ENCODE measurements at regions of chr7 and their contacts with region 1.

Region 1: GRCh38 chr7:129122751-129123509 is 21.6 kb upstream of the TSPAN33 start:
- DNase-seq: peak; percentile 53
- ATAC-seq: peak; percentile 89
- H3K4me3 Mint-ChIP-seq: peak overlapping the region; percentile 73
- H3K27ac Mint-ChIP-seq: peak overlapping the region; percentile 96
- H3K4me1 Mint-ChIP-seq: peaks cover 40% of the 10 kb centered on the region
- H3K27me3 Mint-ChIP-seq: no peaks in the 10 kb centered on the region
- CTCF ChIP-seq: no peak

Region 2: DNA sequence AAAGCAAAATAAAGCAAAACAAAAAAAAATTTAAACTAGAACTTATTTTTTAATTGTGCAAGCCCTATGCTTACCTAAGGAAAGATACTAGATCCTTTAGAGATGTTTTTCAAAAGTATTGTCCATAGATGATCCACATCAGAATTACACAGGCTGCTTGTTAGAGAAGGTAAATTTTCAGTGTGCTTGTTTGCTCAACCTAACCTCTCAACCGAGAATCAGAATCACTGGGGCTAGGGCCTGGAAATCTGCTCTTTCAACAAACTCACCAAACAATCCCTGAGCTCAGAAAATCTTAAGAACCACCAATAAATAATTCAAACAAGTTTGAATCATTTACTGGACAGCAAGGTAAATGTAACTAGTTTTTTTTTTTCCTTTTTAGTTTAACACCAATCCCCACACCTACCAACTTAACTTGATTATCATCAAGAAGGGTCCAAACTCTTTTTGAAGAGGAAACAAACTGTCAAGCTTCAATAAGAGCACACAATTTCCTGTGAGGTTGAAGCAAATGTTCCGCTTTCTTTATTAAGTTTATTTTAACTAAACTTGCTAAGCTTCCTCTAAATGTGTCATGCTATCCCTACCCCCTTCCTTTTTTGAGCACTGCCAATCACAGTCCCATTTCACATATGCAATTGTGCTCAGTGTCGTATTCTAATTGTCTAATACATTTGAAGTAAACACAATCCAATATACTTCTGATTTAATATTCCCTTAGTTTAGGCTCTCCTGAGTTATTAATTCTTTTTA is 14.1 kb after region 1 on chr7:
- CTCF ChIA-PET with region 1: interaction called, 3 read pairs
- POLR2A ChIA-PET with region 1: interaction called, 56 read pairs
- intact Hi-C with region 1: loop called (anchors 1 kb)
- DNase-seq: no peak
- ATAC-seq: peak; percentile 90
- H3K4me3 Mint-ChIP-seq: peak overlapping the region; percentile 76
- H3K27ac Mint-ChIP-seq: peak overlapping the region; percentile 98
- H3K4me1 Mint-ChIP-seq: peaks cover 54% of the 10 kb centered on the region
- H3K27me3 Mint-ChIP-seq: no peaks in the 10 kb centered on the region
- CTCF ChIP-seq: no peak

Region 3: DNA sequence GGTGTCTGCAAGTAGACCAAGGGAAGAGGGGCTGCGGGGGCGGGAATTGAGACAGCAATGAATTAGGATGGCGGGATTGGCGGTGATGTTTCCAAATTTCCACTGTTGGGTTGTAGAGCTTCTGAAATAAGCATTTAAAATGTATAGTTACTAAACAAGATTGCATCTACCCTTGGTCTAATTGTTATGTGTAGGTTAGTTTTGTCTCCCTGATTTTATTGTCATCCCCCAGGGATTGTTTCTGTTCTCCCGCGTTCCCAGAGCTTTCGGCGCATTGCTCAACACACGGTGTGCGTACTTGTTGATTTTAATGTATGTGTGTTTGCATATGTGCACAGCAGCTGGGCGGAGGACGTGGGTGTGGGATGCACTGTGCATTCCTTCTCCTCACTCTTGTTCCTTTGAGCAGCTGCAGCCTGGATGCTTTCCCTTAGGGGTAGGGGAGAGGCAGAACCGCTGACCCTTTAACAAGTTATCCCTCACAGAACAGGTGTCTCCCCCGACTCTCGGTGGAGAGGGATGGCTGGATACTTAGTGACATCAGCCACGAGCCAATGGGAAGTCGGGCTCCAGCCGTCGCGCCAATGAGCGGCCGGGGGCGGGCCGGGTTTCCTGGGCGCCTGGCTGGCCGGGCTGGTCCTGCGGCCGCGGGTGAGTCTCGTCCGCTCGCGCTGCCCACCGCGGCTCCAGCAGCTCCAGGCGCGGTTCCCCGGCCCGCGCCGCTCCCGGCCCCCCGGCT is 21.3 kb after region 1 on chr7 and contains the start of gene TSPAN33:
- CTCF ChIA-PET with region 1: interaction called, 10 read pairs
- POLR2A ChIA-PET with region 1: interaction called, 118 read pairs
- intact Hi-C with region 1: loop called (anchors 1 kb)
- DNase-seq: peak; percentile 75
- ATAC-seq: peak; percentile 62
- H3K4me3 Mint-ChIP-seq: peak within 1 kb of the TSS; percentile 98
- H3K27ac Mint-ChIP-seq: peak within 1 kb of the TSS; percentile 99
- H3K4me1 Mint-ChIP-seq: peaks cover 48% of the 10 kb centered on the region
- H3K27me3 Mint-ChIP-seq: no peaks in the 10 kb centered on the region
- CTCF ChIP-seq: no peak
- total RNA-seq, gene TSPAN33: 332 and 341 TPM in 2 replicates